Activated CD4-positive, alpha-beta T cell treated with anti-CD3 and anti-CD28 coated beads for 36 hours (primary cell): ENCODE measurements at regions of chr1 and their contacts with region 1.

Region 1: GRCh38 chr1:26472901-26473845 is 933 bp downstream of the HMGN2 start:
- DNase-seq: peak; percentile 97
- ATAC-seq: peak; percentile 62
- H3K4me3 Mint-ChIP-seq: peak overlapping the region; percentile 91
- H3K27ac Mint-ChIP-seq: peak overlapping the region; percentile 43
- H3K4me1 Mint-ChIP-seq: peaks cover 50% of the 10 kb centered on the region
- H3K27me3 Mint-ChIP-seq: no peaks in the 10 kb centered on the region

Region 2: DNA sequence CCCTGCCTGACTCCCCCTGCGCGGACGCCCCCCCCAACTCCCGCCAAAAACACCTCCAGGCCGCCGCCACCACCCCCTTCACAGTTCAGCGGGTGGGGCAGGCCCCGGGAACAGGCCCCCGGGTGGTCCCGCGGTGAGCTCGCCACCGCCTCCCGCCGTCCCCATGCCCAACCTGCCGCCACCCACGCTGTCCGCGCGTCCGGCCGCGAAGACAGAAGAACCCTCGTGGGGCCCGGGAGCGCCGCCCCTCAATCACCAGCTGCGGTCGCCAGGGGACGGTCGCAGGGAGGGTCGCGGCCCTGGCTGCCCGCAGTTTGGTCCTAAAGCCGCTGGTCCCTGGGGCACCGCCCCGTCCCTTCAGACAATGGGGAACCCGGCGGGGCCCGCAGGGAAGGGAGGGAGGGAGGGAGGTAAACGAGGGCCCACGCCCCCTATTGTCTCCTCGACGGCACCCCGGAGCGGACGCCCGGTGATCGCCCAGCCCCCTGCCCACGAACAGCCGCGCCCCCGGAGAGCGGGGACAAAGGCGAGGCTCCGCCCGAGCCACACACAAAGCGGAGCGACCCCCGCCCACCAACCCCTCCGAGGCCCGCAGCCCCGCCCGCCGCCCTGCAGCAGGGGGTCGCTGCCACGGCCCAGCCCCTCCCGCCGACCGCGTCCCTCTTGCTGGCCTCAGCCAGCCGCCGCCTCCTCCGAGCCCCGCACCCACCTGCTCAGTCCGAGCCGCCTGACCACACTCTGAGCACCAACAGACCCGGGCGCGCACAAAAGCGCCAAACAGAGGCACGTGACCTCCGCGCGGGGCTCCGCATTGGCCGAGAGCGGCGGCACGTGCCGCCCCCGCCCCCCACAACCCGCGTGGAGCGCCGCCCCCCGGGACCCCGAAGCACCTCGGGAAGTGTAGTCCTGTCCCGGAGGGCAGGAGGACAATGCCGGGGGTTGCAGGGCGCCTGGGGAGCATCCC is 567.2 kb before region 1 on chr1 and contains the start of gene STMN1:
- CTCF ChIA-PET with region 1: no interaction called
- POLR2A ChIA-PET with region 1: no interaction called
- intact Hi-C with region 1: loop called in 1 of 2 experiments (anchors 1 kb)
- DNase-seq: peak; percentile 96
- ATAC-seq: peak; percentile 81
- H3K4me3 Mint-ChIP-seq: peak within 1 kb of the TSS; percentile 84
- H3K27ac Mint-ChIP-seq: peak within 1 kb of the TSS; percentile 83
- H3K4me1 Mint-ChIP-seq: peaks cover 25% of the 10 kb centered on the region
- H3K27me3 Mint-ChIP-seq: no peaks in the 10 kb centered on the region
- total RNA-seq, gene STMN1: 557 to 771 TPM

Region 3: GRCh38 chr1:26431979-26432695 is 41.0 kb before region 1 on chr1 and contains the start of gene DHDDS:
- CTCF ChIA-PET with region 1: interaction called, 6 read pairs
- POLR2A ChIA-PET with region 1: interaction called, 8 read pairs
- intact Hi-C with region 1: loop called (anchors 1 to 2 kb)
- DNase-seq: peak; percentile 99
- ATAC-seq: peak; percentile 98
- H3K4me3 Mint-ChIP-seq: peak within 1 kb of the TSS; percentile 92
- H3K27ac Mint-ChIP-seq: peak within 1 kb of the TSS; percentile 92
- H3K4me1 Mint-ChIP-seq: peaks cover 17% of the 10 kb centered on the region
- H3K27me3 Mint-ChIP-seq: no peaks in the 10 kb centered on the region
- total RNA-seq, gene DHDDS: 34.1 to 40.7 TPM

Region 4: DNA sequence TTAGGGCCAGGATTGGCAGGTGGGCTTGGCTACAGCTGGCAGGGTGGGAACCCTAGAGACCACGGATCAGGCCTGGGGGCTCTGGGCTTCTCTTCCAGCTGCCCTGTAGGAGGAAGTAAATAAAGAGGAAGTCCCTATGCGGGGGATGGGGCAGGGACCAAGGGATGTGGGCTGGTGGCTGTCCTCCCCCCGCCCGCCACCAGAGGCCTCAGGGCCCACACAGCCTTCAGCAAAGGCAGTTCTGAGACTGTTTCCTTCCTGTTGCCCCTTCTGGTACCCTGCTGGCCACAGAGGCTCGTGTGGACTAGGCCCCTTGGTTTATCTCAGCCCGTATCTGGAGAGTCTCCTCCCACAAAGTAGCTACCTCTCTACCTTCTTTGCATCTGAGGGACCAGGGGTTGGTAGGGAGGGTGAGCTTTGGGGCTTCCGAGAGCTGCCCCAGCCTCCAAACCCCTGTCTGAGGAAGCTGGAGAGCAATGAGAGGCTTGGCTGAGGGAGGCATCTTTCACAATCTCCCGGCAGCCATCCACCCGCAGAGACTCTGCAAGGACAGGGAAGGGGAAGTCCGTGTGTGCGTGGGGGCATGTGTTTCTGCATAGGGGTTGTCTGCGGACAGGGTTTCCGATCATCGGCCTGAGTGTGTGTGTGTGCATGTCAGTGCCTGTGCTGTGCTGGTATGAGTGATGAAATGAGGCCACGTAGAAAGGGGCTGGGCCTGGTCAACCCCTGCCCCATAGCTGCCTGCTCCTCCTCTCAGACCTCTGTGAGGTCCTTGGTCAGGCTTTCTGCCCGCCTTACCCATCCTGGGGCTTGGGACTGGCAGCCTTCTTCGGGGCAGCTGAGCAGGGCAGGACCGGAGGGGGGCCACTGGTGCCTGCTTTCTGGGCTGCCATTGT is 68.9 kb after region 1 on chr1:
- CTCF ChIA-PET with region 1: interaction called, 4 read pairs
- POLR2A ChIA-PET with region 1: interaction called, 5 read pairs
- intact Hi-C with region 1: loop called in 1 of 2 experiments (anchors 2 kb)
- DNase-seq: peak; percentile 93
- ATAC-seq: peak; percentile 65
- H3K4me3 Mint-ChIP-seq: peak overlapping the region; percentile 67
- H3K27ac Mint-ChIP-seq: peak overlapping the region; percentile 94
- H3K4me1 Mint-ChIP-seq: peaks cover 83% of the 10 kb centered on the region
- H3K27me3 Mint-ChIP-seq: no peaks in the 10 kb centered on the region

Region 5: GRCh38 chr1:26921540-26922430 is 448.6 kb after region 1 on chr1 and contains the start of gene NUDC:
- CTCF ChIA-PET with region 1: interaction called, 3 read pairs
- POLR2A ChIA-PET with region 1: no interaction called
- intact Hi-C with region 1: loop called in 1 of 2 experiments (anchors 1 kb)
- DNase-seq: peak; percentile 98
- ATAC-seq: peak; percentile 98
- H3K4me3 Mint-ChIP-seq: peak within 1 kb of the TSS; percentile 82
- H3K27ac Mint-ChIP-seq: peak within 1 kb of the TSS; percentile 90
- H3K4me1 Mint-ChIP-seq: peaks cover 38% of the 10 kb centered on the region
- H3K27me3 Mint-ChIP-seq: no peaks in the 10 kb centered on the region
- total RNA-seq, gene NUDC: 95.9 to 101 TPM